Caco-2 (cell line): ENCODE measurements at regions of chr4 and their contacts with region 1.

Region 1: DNA sequence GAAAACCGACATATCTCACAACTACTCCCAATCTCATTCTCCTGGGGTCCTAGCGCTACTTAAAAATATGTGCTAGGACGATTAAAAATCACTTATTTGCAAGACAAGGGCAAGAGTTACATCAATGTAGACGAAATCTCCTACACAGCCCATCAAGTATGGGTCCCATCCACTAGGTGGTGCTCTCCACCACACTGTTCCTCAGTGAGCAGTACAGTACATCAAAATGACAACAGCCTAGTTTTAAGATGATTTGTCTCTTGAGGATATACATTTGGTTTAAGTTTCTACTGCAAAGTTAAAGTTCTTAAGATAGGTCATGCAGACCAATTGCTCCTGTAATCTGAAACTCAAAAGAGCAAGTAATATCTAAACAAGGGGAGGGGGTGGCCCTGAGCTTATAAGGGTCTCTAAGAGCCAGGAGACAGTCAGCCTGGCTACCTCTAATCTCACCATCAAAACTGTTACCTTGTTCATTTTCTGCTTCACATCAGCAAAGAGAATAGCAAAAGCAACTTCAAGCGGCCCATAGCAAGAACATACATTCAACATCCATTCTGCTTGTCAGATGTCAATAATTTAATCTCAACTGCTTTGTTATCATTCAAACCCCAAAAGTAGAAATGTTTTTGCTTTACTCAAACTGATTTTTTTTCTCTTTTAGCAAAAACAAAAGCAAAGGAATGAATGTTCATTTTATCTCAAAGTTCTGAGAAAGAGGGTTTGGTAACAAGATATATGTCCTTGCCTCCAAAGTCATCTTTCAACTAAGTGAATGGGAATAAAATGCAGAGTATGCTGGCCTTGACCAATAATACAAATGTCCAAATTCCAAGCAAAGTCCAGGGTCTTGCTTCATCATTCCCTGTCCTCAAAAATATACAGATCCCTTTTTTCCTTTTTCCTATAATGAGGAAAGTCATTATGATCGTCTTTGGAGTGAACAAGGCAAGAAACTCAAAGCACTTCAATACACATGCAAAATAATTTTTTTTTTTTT is 53.1 kb downstream of the STX18 start:
- DNase-seq: peak; percentile 63 to 75
- H3K4me3 ChIP-seq: no peak overlapping the region
- H3K4me3 Mint-ChIP-seq: no peak overlapping the region
- H3K27ac Mint-ChIP-seq: no peak overlapping the region
- H3K4me1 ChIP-seq: peaks cover 9% of the 10 kb centered on the region
- H3K4me1 Mint-ChIP-seq: no peaks in the 10 kb centered on the region
- H3K27me3 ChIP-seq: no peaks in the 10 kb centered on the region
- H3K27me3 Mint-ChIP-seq: no peaks in the 10 kb centered on the region
- CTCF ChIP-seq: peak; percentile 77

Region 2: GRCh38 chr4:4477391-4477790 is 11.3 kb before region 1 on chr4:
- CTCF ChIA-PET with region 1: no interaction called
- POLR2A ChIA-PET with region 1: no interaction called
- intact Hi-C with region 1: no loop called
- DNase-seq: no peak
- H3K4me3 ChIP-seq: no peak overlapping the region
- H3K4me3 Mint-ChIP-seq: no peak overlapping the region
- H3K27ac Mint-ChIP-seq: no peak overlapping the region
- H3K4me1 ChIP-seq: no peaks in the 10 kb centered on the region; the same call in 1 of the 2 replicates
- H3K4me1 Mint-ChIP-seq: peaks cover 18% of the 10 kb centered on the region
- H3K27me3 ChIP-seq: no peaks in the 10 kb centered on the region
- H3K27me3 Mint-ChIP-seq: no peaks in the 10 kb centered on the region
- CTCF ChIP-seq: no peak

Region 3: DNA sequence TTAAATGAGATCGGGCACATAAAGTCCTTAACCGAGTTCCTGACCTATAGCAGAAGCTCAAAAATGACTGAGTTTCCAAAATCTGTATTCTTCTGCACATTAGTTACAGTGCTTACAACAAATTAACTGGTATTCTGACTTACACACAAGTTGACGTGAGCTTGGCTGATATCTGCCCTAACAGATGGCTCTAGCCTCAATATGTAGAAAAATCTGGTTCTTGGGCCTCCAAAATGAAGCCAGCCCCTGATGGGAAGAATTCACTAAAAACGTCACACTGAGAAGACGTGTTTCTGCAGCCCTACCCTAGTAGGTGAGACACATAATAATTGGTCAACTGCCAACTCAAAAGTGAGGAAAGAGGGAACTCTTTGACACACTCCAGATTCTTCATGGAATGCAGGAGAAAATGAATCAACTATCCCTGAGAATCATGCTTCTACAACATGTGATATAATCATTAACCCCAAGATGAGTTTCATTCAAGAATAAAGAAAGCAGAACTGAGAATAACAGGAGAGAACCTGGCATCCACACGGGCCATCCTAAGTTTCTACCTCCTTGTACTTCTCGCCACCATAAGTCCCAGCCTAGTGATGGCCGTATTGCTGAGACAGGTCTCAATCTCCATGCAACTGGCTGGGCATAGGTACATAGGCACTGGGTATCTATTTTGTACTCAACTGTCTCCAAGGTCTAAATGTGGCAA is 44.9 kb after region 1 on chr4:
- CTCF ChIA-PET with region 1: no interaction called
- POLR2A ChIA-PET with region 1: no interaction called
- intact Hi-C with region 1: no loop called
- DNase-seq: no peak
- H3K4me3 ChIP-seq: no peak overlapping the region
- H3K4me3 Mint-ChIP-seq: no peak overlapping the region
- H3K27ac Mint-ChIP-seq: no peak overlapping the region
- H3K4me1 ChIP-seq: no peaks in the 10 kb centered on the region
- H3K4me1 Mint-ChIP-seq: peaks cover 14% of the 10 kb centered on the region
- H3K27me3 ChIP-seq: no peaks in the 10 kb centered on the region
- H3K27me3 Mint-ChIP-seq: no peaks in the 10 kb centered on the region
- CTCF ChIP-seq: no peak

Region 4: GRCh38 chr4:4555916-4556315 is 67.2 kb after region 1 on chr4:
- CTCF ChIA-PET with region 1: no interaction called
- POLR2A ChIA-PET with region 1: no interaction called
- intact Hi-C with region 1: loop called (anchors 5 kb)
- DNase-seq: peak in 1 of 2 experiments; percentile 29
- H3K4me3 ChIP-seq: no peak overlapping the region
- H3K4me3 Mint-ChIP-seq: peak overlapping the region; percentile 46
- H3K27ac Mint-ChIP-seq: peak overlapping the region; percentile 80
- H3K4me1 ChIP-seq: peaks cover 21% of the 10 kb centered on the region
- H3K4me1 Mint-ChIP-seq: peaks cover 16% of the 10 kb centered on the region
- H3K27me3 ChIP-seq: no peaks in the 10 kb centered on the region
- H3K27me3 Mint-ChIP-seq: no peaks in the 10 kb centered on the region
- CTCF ChIP-seq: no peak

Region 5: DNA sequence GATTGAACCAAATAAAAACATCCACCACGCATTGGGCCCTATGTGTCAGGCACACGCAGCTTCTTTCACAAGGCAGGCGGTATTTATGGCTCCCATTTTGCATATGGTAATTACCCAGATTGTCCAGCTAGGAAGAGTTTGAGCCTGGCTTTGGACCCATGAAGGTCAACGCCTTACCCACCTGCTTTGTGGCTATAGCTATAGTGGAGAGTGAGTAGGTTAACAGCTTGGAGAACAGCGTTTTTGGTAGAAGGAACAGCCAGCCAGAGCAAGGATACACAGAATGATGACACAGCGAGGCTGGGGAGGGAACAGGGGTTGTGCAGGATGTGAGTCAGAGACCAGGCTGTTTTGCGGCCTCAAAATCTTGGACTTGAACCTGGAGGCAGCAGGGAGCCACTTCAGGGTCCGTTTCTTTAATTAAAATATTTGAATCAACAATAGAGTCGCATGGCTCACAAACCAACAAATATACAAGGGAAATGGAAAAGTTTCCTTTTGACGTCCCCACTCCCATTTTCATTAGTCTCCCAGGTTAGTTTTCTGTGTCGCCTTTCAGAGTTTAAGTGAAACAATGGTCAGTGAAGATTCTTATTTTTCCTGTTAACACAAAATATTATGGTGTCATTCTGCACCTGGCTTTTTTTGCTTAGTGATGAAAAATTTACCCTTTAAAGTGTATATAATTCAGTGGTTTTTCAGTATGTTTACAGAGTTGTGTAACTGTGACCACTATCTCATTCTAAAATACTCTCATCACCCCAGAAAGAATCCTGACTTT is 171.4 kb after region 1 on chr4:
- CTCF ChIA-PET with region 1: no interaction called
- POLR2A ChIA-PET with region 1: no interaction called
- intact Hi-C with region 1: loop called (anchors 10 kb)
- DNase-seq: no peak
- H3K4me3 ChIP-seq: no peak overlapping the region
- H3K4me3 Mint-ChIP-seq: no peak overlapping the region
- H3K27ac Mint-ChIP-seq: peak overlapping the region; percentile 28
- H3K4me1 ChIP-seq: peaks cover 15% of the 10 kb centered on the region
- H3K4me1 Mint-ChIP-seq: peaks cover 11% of the 10 kb centered on the region
- H3K27me3 ChIP-seq: no peaks in the 10 kb centered on the region
- H3K27me3 Mint-ChIP-seq: no peaks in the 10 kb centered on the region
- CTCF ChIP-seq: no peak

Region 6: GRCh38 chr4:4880492-4880891 is 391.8 kb after region 1 on chr4:
- CTCF ChIA-PET with region 1: no interaction called
- POLR2A ChIA-PET with region 1: no interaction called
- intact Hi-C with region 1: loop called (anchors 1 kb)
- DNase-seq: no peak
- H3K4me3 ChIP-seq: no peak overlapping the region
- H3K4me3 Mint-ChIP-seq: no peak overlapping the region
- H3K27ac Mint-ChIP-seq: no peak overlapping the region
- H3K4me1 ChIP-seq: no peaks in the 10 kb centered on the region
- H3K4me1 Mint-ChIP-seq: peaks cover 16% of the 10 kb centered on the region
- H3K27me3 ChIP-seq: no peaks in the 10 kb centered on the region
- H3K27me3 Mint-ChIP-seq: no peaks in the 10 kb centered on the region
- CTCF ChIP-seq: peak; percentile 22 to 28